Adrenal gland (tissue), 19 donors: ENCODE measurements at regions of chr17 and their contacts with region 1.

Region 1: DNA sequence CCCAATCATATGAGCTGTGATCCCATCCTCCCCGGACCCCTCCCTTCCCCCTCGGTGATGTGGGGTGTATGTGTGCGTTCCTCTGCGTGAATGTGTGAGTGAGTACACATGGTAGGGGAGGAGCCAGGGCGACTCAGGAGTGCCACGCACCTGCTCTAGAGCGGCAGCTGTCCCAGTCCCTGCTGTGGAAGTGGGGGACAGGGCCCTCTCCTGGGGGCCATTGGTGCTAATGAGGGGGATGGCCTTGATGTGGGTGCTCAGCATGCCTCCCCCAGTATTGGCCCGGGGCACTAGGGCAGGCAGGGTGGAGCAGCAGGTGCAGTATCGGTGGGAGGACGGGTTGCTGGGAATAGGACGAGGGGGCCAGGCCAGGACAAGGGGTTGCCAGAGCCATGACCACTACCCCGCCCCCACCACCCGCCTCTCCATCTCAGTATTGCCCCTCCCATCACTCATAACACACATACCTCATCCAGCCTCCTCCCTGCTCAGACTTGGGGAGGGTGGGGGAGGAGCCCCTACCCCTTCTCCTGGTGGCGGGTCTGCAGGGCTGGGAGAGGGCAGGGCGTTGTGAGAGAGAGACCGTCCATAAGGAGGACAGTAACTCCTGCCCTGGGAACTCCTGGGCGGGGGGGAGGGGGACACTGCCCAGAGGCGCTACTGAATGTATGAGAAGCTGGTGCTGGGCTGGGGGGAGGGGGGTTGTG is 8.5 kb downstream of the NR1D1 start:
- DNase-seq: peak; percentile 51 to 81 (median 70)
- H3K4me3 ChIP-seq: no peak overlapping the region
- H3K27ac ChIP-seq: peak overlapping the region in 4 of 5 donors; percentile 43 to 100 (median 96)
- H3K4me1 ChIP-seq: peaks cover 30 to 49% of the 10 kb centered on the region in 2 donors
- H3K27me3 ChIP-seq: no peaks in the 10 kb centered on the region
- CTCF ChIP-seq: no peak
- POLR2A ChIP-seq: peak in 1 of 2 donors; percentile 42

Region 2: DNA sequence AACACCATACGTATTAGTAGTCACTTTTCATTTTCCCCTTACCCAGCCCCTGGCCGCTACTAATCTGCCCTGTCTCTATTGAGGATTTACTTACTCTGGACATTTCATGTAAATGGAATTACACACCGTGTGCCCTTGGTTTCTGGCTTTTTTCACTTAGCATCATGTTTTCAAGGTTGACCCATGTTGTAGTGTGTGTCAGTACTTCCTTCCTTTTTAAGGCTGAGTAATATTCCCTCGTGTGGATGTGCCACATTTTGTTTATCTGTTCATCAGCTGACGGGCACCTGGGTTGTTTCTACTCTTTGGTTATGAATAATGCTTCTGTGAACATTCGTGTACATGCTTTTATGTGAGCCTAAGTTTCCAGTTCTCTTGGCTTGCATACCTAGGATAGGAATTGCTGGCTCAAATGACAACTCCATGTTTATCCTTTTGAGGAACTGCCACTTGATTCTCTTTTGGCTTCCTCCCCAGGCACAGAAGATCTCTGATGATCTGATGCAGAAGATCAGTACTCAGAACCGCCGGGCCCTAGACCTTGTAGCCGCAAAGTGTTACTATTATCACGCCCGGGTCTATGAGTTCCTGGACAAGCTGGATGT is 103.5 kb before region 1 on chr17:
- intact Hi-C with region 1: no loop called
- DNase-seq: no peak
- H3K4me3 ChIP-seq: no peak overlapping the region
- H3K27ac ChIP-seq: no peak overlapping the region
- H3K4me1 ChIP-seq: peaks cover 0 to 2% of the 10 kb centered on the region in 2 donors
- H3K27me3 ChIP-seq: no peaks in the 10 kb centered on the region
- CTCF ChIP-seq: no peak
- POLR2A ChIP-seq: no peak

Region 3: GRCh38 chr17:40019140-40019991 is 72.5 kb before region 1 on chr17:
- intact Hi-C with region 1: loop called in 1 of 2 experiments (anchors 5 kb)
- DNase-seq: peak in 2 of 7 donors; percentile 24 to 28
- H3K4me3 ChIP-seq: no peak overlapping the region
- H3K27ac ChIP-seq: peak overlapping the region in 3 of 5 donors; percentile 40 to 88 (median 84)
- H3K4me1 ChIP-seq: peaks cover 37 to 46% of the 10 kb centered on the region in 2 donors
- H3K27me3 ChIP-seq: no peaks in the 10 kb centered on the region
- CTCF ChIP-seq: no peak
- POLR2A ChIP-seq: no peak

Region 4: GRCh38 chr17:40062329-40063186 is 29.3 kb before region 1 on chr17 and contains the start of gene THRA:
- intact Hi-C with region 1: loop called in 1 of 2 experiments (anchors 2 kb)
- DNase-seq: peak; percentile 55 to 78 (median 73)
- H3K4me3 ChIP-seq: peak within 1 kb of the TSS; percentile 73 to 100 (median 91)
- H3K27ac ChIP-seq: peak within 1 kb of the TSS; percentile 72 to 96 (median 93)
- H3K4me1 ChIP-seq: peaks cover 23 to 40% of the 10 kb centered on the region in 2 donors
- H3K27me3 ChIP-seq: no peaks in the 10 kb centered on the region
- CTCF ChIP-seq: peak in 2 of 6 experiments; percentile 9 to 35
- POLR2A ChIP-seq: no peak
- total RNA-seq, gene THRA: 39.2 to 110 (median 73.8) TPM